ACHN (cell line): ENCODE measurements at regions of chr4 and their contacts with region 1.

Region 1: GRCh38 chr4:88244816-88245579 is 39.4 kb downstream of the PPM1K start:
- DNase-seq: no peak

Region 2: DNA sequence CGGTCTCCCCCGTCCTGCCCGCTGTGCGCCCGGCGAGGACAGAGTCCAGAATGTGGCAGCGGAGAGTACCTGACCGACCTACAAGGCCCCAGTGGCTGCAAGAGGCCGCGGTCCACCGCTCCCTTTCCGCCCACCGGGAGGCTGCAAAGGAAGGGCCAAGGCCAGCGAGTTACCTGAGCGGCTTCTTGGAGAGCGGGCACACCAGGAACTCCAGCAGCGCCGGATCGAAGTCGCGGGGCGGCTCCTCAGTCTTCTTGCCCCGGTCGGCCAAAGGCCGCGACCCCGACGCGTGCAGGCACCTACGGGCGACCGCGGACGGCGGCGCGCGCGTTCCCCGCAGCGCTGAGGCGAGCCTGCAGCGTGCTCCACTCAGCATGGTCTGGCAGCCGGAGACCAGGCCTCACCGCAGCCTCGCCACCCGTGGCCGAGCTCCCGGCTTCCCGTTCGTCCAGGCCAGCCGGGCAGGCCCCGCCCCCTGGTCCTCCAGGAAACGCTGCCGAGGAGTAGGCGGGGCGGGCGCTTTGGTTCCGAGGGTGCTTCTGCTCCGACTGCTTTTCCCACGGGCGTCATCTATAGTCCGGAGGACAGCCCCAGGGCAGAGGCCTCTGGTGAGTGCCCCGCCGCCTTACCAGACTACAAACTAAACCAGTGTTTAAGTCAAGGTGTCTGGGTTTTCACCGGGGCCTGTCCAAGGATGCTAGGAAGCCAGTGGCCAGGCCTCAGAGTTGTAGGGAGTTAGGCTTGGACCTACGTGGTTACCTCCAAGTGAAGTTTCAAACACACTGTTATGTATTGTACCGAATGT is 278.5 kb after region 1 on chr4 and contains the start of gene PYURF:
- in situ Hi-C with region 1: loop called (anchors 25 kb)
- DNase-seq: peak; percentile 91